ENCODE measurements at regions of chr15 and their contacts with region 1.

Region 1: DNA sequence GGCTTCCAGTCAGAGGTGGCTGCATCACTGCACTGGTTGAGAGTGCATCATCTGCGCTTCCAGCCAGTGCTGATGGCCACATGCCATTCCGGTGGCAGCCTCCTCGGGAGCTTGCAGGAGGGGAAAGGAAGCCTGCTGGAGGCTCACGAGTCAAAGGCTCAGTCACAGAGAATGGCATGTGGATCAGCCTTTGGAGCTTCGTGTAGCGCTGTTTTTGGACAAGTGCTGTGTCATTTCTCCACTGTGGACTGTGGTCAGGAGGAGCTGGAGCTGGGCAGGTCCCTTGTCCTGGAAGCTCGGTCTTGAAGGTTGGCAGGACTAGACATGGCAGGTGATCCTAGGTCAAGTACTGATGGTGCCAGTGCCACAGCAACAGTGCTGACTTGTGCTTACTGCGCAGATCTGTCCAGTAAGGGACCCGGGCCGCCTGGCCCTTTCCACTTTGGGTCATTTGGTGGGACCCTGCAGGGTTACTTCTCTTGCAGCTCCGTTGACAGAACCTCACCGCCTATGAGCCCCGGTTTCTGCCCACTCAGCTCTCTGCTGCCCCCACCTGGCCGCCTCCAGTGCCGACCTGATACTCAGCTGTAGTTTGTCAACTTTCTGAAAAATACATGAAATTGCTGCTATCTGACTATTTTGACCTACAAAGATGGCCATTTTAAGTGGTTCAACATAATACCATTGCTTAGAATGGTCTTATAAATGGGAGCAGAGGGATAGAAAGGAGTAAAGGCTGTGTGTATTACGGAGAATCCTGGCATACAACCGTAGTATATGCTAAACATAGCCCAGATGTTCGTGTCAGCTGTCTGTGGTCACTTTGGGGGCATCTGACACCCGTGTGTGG is 27.6 kb upstream of the TRPM1 start:
- DNase-seq: peak; percentile 71 to 86
- H3K4me3 ChIP-seq: no peak overlapping the region
- H3K4me3 Mint-ChIP-seq: no peak overlapping the region
- H3K27ac Mint-ChIP-seq: no peak overlapping the region
- H3K4me1 ChIP-seq: no peaks in the 10 kb centered on the region; the same call in 1 of the 2 replicates
- H3K4me1 Mint-ChIP-seq: no peaks in the 10 kb centered on the region
- H3K27me3 ChIP-seq: no peaks in the 10 kb centered on the region
- H3K27me3 Mint-ChIP-seq: no peaks in the 10 kb centered on the region
- CTCF ChIP-seq: peak; percentile 94 to 98

Region 2: GRCh38 chr15:30670056-30670455 is 459.1 kb before region 1 on chr15:
- CTCF ChIA-PET with region 1: no interaction called
- POLR2A ChIA-PET with region 1: no interaction called
- intact Hi-C with region 1: loop called (anchors 10 kb)
- DNase-seq: no peak
- H3K4me3 ChIP-seq: no peak overlapping the region
- H3K4me3 Mint-ChIP-seq: no peak overlapping the region
- H3K27ac Mint-ChIP-seq: no peak overlapping the region
- H3K4me1 ChIP-seq: no peaks in the 10 kb centered on the region
- H3K4me1 Mint-ChIP-seq: no peaks in the 10 kb centered on the region
- H3K27me3 ChIP-seq: no peaks in the 10 kb centered on the region
- H3K27me3 Mint-ChIP-seq: no peaks in the 10 kb centered on the region
- CTCF ChIP-seq: no peak

Region 3: GRCh38 chr15:30859091-30859874 is 269.9 kb before region 1 on chr15:
- CTCF ChIA-PET with region 1: interaction called, 13 read pairs
- POLR2A ChIA-PET with region 1: no interaction called
- intact Hi-C with region 1: no loop called
- DNase-seq: peak in 1 of 2 experiments; percentile 32
- H3K4me3 ChIP-seq: no peak overlapping the region
- H3K4me3 Mint-ChIP-seq: no peak overlapping the region
- H3K27ac Mint-ChIP-seq: no peak overlapping the region
- H3K4me1 ChIP-seq: no peaks in the 10 kb centered on the region
- H3K4me1 Mint-ChIP-seq: no peaks in the 10 kb centered on the region
- H3K27me3 ChIP-seq: no peaks in the 10 kb centered on the region
- H3K27me3 Mint-ChIP-seq: no peaks in the 10 kb centered on the region
- CTCF ChIP-seq: peak; percentile 75 to 77

Region 4: DNA sequence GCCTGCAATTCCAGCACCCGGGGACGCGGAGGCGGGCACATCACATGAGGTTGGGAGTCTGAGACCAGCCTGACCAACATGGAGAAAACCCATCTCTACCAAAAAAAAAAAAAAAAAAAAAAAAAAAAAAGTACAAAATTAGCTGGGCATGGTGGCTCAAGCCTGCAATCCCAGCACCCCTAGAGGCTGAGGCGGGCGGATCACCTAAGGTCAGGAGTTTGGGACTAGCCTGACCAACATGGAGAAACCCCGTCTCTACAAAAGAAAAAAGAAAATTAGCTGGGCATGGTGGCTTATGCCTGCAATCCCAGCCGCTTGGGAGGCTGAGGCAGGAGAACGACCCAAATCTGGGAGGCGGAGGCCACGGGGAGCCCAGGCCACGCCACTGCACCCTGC is 232.9 kb before region 1 on chr15:
- CTCF ChIA-PET with region 1: interaction called, 37 read pairs
- POLR2A ChIA-PET with region 1: no interaction called
- intact Hi-C with region 1: loop called (anchors 1 kb)
- DNase-seq: peak in 1 of 2 experiments; percentile 17
- H3K4me3 ChIP-seq: no peak overlapping the region
- H3K4me3 Mint-ChIP-seq: no peak overlapping the region
- H3K27ac Mint-ChIP-seq: no peak overlapping the region
- H3K4me1 ChIP-seq: no peaks in the 10 kb centered on the region
- H3K4me1 Mint-ChIP-seq: no peaks in the 10 kb centered on the region
- H3K27me3 ChIP-seq: no peaks in the 10 kb centered on the region
- H3K27me3 Mint-ChIP-seq: no peaks in the 10 kb centered on the region
- CTCF ChIP-seq: no peak

Region 5: DNA sequence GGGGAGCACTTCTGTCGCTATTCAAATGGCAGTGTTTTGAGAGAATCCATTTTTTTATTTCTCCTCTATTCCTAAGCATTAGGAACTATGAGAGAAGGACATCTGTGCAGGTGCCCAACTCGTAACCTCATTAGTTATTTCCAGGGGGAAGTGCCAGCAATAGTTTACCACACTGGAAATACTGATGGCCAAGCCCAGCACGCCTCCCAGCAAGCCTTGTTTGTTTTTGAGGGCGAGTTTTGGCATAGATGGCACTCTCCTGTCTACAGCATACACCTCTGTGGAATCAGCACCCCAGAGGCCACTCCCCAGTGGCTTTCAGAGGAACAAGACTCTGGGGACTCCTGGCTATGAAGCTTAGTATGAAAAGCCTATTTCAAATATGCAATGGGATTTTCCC is 188.8 kb before region 1 on chr15:
- CTCF ChIA-PET with region 1: interaction called, 9 read pairs
- POLR2A ChIA-PET with region 1: no interaction called
- intact Hi-C with region 1: loop called (anchors 5 kb)
- DNase-seq: no peak
- H3K4me3 ChIP-seq: no peak overlapping the region
- H3K4me3 Mint-ChIP-seq: no peak overlapping the region
- H3K27ac Mint-ChIP-seq: no peak overlapping the region
- H3K4me1 ChIP-seq: no peaks in the 10 kb centered on the region
- H3K4me1 Mint-ChIP-seq: no peaks in the 10 kb centered on the region
- H3K27me3 ChIP-seq: no peaks in the 10 kb centered on the region
- H3K27me3 Mint-ChIP-seq: no peaks in the 10 kb centered on the region
- CTCF ChIP-seq: no peak